ENCODE measurements at regions of chr4 and their contacts with region 1.

Region 1: GRCh38 chr4:150867148-150867547 is 147.9 kb downstream of the LRBA start:
- DNase-seq: peak; percentile 50
- H3K4me3 ChIP-seq: no peak overlapping the region
- H3K27ac ChIP-seq: no peak overlapping the region
- H3K4me1 ChIP-seq: no peaks in the 10 kb centered on the region
- H3K27me3 ChIP-seq: no peaks in the 10 kb centered on the region
- CTCF ChIP-seq: peak; percentile 58

Region 2: DNA sequence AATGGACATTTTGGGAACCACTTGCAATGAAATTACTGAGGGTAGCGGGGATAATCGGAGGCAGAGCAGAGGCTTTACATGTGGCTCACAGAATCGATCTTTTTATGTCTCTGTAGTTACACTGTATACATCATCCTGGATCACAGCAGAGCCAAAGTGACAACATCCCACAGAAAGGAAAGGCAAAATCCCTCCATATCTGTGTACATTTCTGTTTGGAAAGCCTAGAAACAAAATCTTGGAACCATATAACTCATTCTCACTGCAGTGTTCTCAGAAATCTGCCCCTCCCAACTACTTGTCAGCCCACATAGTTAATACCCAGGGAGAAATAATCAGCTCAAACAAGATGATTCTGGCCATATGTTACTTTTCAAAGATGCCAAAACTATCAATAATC is 577.3 kb before region 1 on chr4:
- intact Hi-C with region 1: loop called (anchors 5 kb)
- DNase-seq: no peak
- H3K4me3 ChIP-seq: no peak overlapping the region
- H3K27ac ChIP-seq: no peak overlapping the region
- H3K4me1 ChIP-seq: no peaks in the 10 kb centered on the region
- H3K27me3 ChIP-seq: no peaks in the 10 kb centered on the region
- CTCF ChIP-seq: no peak

Measured in colonic mucosa (tissue), 4 donors.